A673 (cell line): ENCODE measurements at regions of chr20 and their contacts with region 1.

Region 1: DNA sequence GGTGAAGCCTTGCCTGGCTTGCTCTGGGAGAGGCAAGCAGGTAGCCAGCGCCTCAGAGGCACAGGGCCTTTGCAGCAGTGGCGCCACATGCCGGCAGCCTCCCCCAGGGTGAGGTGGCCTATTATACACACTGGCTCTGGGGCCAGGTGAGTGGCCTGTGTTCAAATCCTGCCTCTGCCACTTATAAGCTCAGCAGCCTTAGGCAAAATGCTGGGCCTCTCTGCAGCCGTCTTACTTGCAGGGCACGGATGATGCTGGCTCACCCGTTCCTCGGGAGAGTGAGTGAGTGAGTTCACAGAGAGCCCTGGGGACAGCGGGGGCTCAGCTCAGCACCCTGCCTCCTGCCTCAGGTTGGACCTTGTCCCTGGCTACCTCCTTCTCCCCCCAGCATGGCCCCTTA is 176.9 kb downstream of the TFAP2C start:
- DNase-seq: no peak
- H3K4me3 ChIP-seq: no peak overlapping the region
- H3K27ac ChIP-seq: no peak overlapping the region
- H3K4me1 ChIP-seq: no peaks in the 10 kb centered on the region
- H3K27me3 ChIP-seq: peaks cover 50% of the 10 kb centered on the region
- CTCF ChIP-seq: no peak

Region 2: DNA sequence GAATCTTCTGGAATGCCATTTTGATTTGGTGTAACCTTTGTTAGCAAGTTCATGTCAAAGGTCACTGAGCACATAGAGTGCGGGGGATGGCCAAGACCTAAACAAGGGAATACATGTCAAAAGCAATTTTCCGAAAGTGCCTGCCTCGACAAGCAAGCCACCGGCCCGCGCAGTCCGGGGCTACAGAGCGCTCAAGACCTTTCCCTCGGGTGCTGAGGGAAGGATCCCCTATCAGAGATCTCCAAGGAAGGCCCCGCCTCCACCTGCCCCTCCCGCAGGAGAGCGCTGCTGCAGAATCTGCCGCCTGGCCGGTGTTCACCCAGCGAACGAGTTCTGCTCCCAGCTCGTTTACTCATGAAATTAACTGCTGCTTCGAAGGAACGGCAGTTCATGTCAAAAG is 207.7 kb after region 1 on chr20:
- CTCF ChIA-PET with region 1: interaction called, 13 read pairs
- POLR2A ChIA-PET with region 1: no interaction called
- intact Hi-C with region 1: no loop called
- DNase-seq: peak; percentile 22
- H3K4me3 ChIP-seq: no peak overlapping the region
- H3K27ac ChIP-seq: no peak overlapping the region
- H3K4me1 ChIP-seq: no peaks in the 10 kb centered on the region
- H3K27me3 ChIP-seq: peaks cover 20% of the 10 kb centered on the region
- CTCF ChIP-seq: no peak